OCI-LY7 (cell line): ENCODE measurements at regions of chr15 and their contacts with region 1.

Region 1: GRCh38 chr15:90233376-90234095 is at the start of gene CIB1:
- DNase-seq: peak; percentile 97
- H3K4me3 ChIP-seq: peak within 1 kb of the TSS; percentile 79
- H3K27ac ChIP-seq: peak within 1 kb of the TSS; percentile 73
- H3K4me1 ChIP-seq: peaks cover 31% of the 10 kb centered on the region
- CTCF ChIP-seq: peak; percentile 18; the same call in 1 of the 2 replicates
- total RNA-seq, gene CIB1: 52.8 and 53.2 TPM in 2 replicates

Region 2: GRCh38 chr15:90101969-90102890 is 131.3 kb before region 1 on chr15 and contains the start of gene IDH2:
- CTCF ChIA-PET with region 1: no interaction called
- POLR2A ChIA-PET with region 1: interaction called, 4 read pairs
- intact Hi-C with region 1: loop called (anchors 5 kb)
- DNase-seq: peak; percentile 84
- H3K4me3 ChIP-seq: peak within 1 kb of the TSS; percentile 89
- H3K27ac ChIP-seq: peak within 1 kb of the TSS; percentile 99
- H3K4me1 ChIP-seq: peaks cover 56% of the 10 kb centered on the region
- CTCF ChIP-seq: no peak
- total RNA-seq, gene IDH2: 204 and 220 TPM in 2 replicates

Region 3: GRCh38 chr15:90191794-90192509 is 41.6 kb before region 1 on chr15:
- CTCF ChIA-PET with region 1: interaction called, 4 read pairs
- POLR2A ChIA-PET with region 1: interaction called, 23 read pairs
- intact Hi-C with region 1: loop called (anchors 2 kb)
- DNase-seq: peak; percentile 89
- H3K4me3 ChIP-seq: peak overlapping the region; percentile 53
- H3K27ac ChIP-seq: peak overlapping the region; percentile 79
- H3K4me1 ChIP-seq: peaks cover 62% of the 10 kb centered on the region
- CTCF ChIP-seq: no peak; the same call in 1 of the 2 replicates

Region 4: DNA sequence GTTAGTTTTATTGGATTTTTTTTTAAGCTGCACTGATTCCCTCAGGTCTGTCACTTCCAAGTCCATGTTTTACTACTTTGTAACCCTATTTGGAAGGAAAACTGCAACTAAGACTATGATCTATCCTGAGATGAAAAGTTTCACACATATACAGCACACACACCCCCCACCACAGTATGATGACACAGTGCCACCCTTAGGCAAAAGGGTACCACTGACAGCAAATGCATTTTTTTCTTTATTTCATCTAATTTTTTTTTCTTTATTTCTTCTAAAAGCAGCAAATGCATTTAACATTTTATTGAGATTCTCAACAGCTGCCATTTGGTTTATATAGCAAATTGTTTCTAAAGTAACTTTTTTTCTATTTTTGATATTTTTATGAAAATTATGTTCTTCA is 53.1 kb after region 1 on chr15:
- CTCF ChIA-PET with region 1: no interaction called
- POLR2A ChIA-PET with region 1: interaction called, 3 read pairs
- intact Hi-C with region 1: loop called (anchors 5 kb)
- DNase-seq: peak; percentile 59
- H3K4me3 ChIP-seq: no peak overlapping the region
- H3K27ac ChIP-seq: no peak overlapping the region
- H3K4me1 ChIP-seq: peaks cover 4% of the 10 kb centered on the region
- CTCF ChIP-seq: peak; percentile 92

Region 5: DNA sequence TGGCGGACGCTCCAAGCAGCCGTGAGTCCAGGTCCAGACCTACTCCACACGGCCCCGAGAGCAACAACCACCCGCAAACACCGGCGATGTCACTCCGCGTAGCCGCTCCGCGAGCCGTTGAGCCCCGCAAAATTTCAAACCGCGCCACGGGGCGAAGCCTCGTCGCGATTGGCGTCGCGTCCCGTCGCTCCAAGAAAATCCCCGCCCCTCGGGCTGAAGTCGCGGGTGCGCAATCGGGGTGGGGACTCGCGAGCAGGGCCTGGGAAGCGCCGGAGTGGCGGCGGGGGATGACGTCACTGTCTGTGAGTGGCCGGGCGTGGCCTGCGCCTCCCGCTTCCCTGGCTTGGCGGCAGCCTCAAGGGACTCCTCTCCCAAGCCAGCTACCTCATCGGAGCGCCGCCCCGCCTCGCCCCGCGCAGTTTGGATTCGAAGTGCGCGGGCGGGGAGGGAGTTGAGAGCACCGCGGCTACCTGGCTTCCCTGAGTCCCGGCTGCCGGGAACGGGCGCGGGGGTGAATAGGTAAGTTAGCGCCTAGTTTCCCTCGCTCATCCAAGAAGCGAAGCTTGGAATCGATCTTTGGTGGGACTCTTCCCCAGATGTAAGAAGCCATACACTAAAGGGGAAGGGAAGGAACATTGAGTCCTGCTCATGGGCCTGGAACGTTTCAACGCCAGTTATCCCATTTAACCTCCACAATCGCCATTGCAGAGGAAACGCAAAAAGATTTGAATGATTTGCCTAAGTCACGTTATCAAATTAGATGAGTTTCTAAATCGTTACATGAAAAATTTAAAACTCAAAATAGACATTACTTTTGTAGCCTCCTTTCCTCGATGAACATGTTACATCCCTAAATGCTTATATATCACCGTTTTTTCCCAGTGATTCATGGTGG is 761.1 kb after region 1 on chr15 and contains the start of gene PRC1:
- CTCF ChIA-PET with region 1: no interaction called
- POLR2A ChIA-PET with region 1: no interaction called
- intact Hi-C with region 1: loop called (anchors 10 kb)
- DNase-seq: peak; percentile 98
- H3K4me3 ChIP-seq: peak within 1 kb of the TSS; percentile 84
- H3K27ac ChIP-seq: peak within 1 kb of the TSS; percentile 68
- H3K4me1 ChIP-seq: peaks cover 30% of the 10 kb centered on the region
- CTCF ChIP-seq: no peak
- total RNA-seq, gene PRC1: 224 and 402 TPM in 2 replicates